Activated CD4-positive, alpha-beta memory T cell treated with anti-CD3 and anti-CD28 coated beads for 36 hours (primary cell): ENCODE measurements at regions of chr4 and their contacts with region 1.

Region 1: GRCh38 chr4:169612871-169613859 is 782 bp upstream of the NEK1 start:
- DNase-seq: peak; percentile 84
- H3K4me3 Mint-ChIP-seq: peak overlapping the region; percentile 86
- H3K27ac Mint-ChIP-seq: peak overlapping the region; percentile 94
- H3K4me1 Mint-ChIP-seq: peaks cover 53% of the 10 kb centered on the region
- H3K27me3 Mint-ChIP-seq: no peaks in the 10 kb centered on the region

Region 2: DNA sequence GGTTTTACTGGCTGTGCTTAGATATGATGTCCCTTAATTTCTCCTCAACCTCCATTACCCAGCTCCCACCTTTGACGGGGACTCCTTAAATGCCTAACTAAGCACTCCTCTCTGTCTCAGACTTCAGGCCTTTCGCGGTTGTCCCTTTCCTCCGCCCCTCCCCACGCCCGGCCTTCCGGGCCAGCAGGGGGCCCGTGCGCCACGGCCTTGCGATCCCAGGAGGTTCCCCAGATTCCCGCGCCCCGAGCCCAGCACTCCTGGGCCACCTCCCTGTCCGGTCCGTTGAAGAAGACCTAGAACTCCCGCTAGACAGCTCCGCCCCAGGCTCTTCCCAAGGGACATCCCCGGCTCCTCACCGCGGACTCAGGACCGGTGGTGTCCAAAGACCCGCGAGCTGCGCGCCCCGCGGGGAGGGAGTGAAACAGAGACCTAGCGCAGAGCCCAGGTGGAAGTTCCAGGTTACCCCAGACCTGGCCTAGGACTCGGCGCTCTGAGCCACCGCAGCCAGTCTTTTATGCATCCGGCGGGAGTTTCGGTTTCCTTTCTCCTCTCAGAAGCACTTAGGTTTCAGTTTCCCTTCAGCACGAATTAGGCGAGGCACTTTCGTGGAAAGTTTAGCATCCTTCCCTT is 1294.8 kb before region 1 on chr4 and contains the start of gene DDX60:
- CTCF ChIA-PET with region 1: no interaction called
- POLR2A ChIA-PET with region 1: no interaction called
- intact Hi-C with region 1: loop called (anchors 5 kb)
- DNase-seq: peak; percentile 89
- H3K4me3 Mint-ChIP-seq: peak within 1 kb of the TSS; percentile 84
- H3K27ac Mint-ChIP-seq: peak within 1 kb of the TSS; percentile 88
- H3K4me1 Mint-ChIP-seq: peaks cover 32% of the 10 kb centered on the region
- H3K27me3 Mint-ChIP-seq: no peaks in the 10 kb centered on the region
- total RNA-seq, gene DDX60: 24.1 to 28.9 TPM

Region 3: DNA sequence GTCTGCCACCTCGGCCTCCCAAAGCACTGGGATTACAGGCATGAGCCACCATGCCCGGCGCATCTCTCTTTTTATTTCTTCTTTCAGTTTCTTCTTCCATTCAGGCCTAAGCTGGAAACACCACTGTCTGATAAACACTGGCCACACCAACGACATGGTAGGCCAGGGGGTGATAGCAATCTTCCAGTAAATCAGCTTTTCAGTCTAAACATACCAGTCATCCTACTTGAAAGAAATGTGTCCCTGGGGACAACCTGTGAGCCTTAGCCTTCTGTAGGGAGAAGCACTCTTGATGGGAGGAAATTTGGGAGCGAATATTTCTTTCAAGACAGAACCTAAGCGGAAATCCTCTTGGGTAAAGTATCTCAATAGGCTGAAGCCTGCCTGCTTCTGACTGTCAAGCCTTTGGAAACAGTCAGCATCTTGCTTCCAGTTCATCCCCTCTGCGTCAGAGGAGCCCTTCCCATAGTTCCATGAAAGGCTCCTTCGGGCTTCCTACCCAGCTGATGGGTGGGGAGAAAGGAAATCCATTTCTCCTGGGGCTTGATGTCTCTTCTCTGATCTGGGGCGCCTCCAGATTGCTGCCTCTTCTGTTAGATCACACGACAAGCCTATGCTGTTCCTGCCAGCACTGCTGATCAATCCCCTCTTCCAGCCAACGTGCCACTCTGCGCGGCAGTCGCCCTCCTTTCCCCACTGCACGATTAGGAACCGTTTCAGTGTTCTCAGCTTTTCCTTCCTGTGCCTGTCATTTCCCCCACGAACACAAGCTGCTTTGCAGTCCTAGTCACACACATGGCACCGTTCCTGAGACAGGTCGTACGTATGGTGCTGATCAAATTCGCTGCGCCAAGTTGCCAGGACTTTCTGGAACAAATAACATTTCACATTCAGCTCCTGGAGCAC is 553.6 kb before region 1 on chr4:
- CTCF ChIA-PET with region 1: no interaction called
- POLR2A ChIA-PET with region 1: no interaction called
- intact Hi-C with region 1: no loop called
- DNase-seq: no peak
- H3K4me3 Mint-ChIP-seq: no peak overlapping the region
- H3K27ac Mint-ChIP-seq: no peak overlapping the region
- H3K4me1 Mint-ChIP-seq: no peaks in the 10 kb centered on the region
- H3K27me3 Mint-ChIP-seq: peaks cover 1% of the 10 kb centered on the region

Region 4: DNA sequence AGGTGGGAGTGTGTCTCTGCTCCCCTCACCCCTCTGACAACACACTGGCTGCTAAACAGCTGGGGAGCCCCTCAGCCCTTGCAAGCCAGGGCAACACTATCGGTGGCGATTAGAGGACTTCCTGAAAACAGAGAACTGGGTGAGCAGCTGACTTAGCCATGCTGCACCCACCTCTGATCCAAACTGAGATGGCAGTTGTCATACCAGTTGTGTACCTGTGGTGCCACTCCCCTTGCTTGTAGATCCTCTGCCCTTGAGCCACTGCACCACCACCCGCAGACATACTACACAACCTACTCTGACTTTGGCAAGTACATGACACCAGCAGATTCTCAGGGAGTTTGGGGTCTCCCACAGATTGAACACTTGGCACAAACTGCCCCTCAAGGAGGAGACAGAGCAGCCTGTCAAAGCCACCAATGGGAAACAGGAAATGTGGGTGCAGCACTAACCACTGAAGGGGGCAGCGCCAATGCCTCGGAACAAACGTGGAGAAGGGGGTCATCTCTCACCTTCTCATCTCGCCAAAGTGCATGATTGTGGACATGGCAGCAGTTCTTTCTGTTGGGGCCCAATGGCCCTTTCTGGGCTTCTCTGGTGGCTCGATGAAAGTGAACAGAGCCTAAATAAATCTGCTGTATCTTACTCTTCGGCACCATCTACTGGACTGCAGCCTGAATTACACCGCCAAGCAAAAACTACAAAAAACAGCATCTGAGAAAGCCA is 120.6 kb before region 1 on chr4:
- CTCF ChIA-PET with region 1: no interaction called
- POLR2A ChIA-PET with region 1: no interaction called
- intact Hi-C with region 1: no loop called
- DNase-seq: peak; percentile 41
- H3K4me3 Mint-ChIP-seq: no peak overlapping the region
- H3K27ac Mint-ChIP-seq: no peak overlapping the region
- H3K4me1 Mint-ChIP-seq: peaks cover 2% of the 10 kb centered on the region
- H3K27me3 Mint-ChIP-seq: no peaks in the 10 kb centered on the region

Region 5: DNA sequence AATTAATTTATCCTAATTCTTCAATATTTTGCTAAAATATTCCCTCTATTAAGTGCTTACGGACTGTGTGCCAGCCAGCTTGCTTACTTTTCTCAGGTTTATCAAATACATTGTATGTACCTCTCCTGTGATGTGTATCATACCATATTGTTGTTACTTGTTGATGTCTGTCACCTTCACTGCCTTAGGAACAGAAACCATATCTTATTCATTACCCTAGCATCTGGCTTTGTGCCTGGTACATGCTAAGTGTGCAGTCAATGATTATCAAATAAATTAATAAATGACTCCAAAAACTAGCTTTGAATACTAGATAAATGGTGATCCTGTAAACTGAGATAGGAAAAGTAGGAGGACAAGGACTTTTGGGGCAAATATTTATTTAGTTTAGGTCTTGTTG is 14.1 kb after region 1 on chr4:
- CTCF ChIA-PET with region 1: interaction called, 7 read pairs
- POLR2A ChIA-PET with region 1: interaction called, 13 read pairs
- intact Hi-C with region 1: loop called (anchors 1 kb)
- DNase-seq: no peak
- H3K4me3 Mint-ChIP-seq: no peak overlapping the region
- H3K27ac Mint-ChIP-seq: peak overlapping the region; percentile 33
- H3K4me1 Mint-ChIP-seq: peaks cover 51% of the 10 kb centered on the region
- H3K27me3 Mint-ChIP-seq: no peaks in the 10 kb centered on the region

Region 6: GRCh38 chr4:169723207-169723965 is 110.2 kb after region 1 on chr4:
- CTCF ChIA-PET with region 1: interaction called, 6 read pairs
- POLR2A ChIA-PET with region 1: no interaction called
- intact Hi-C with region 1: loop called (anchors 1 kb)
- DNase-seq: no peak
- H3K4me3 Mint-ChIP-seq: no peak overlapping the region
- H3K27ac Mint-ChIP-seq: no peak overlapping the region
- H3K4me1 Mint-ChIP-seq: peaks cover 11% of the 10 kb centered on the region
- H3K27me3 Mint-ChIP-seq: no peaks in the 10 kb centered on the region

Region 7: GRCh38 chr4:169791527-169792156 is 178.5 kb after region 1 on chr4:
- CTCF ChIA-PET with region 1: interaction called, 8 read pairs
- POLR2A ChIA-PET with region 1: no interaction called
- intact Hi-C with region 1: loop called (anchors 2 kb)
- DNase-seq: peak; percentile 35
- H3K4me3 Mint-ChIP-seq: peak overlapping the region; percentile 3
- H3K27ac Mint-ChIP-seq: no peak overlapping the region
- H3K4me1 Mint-ChIP-seq: peaks cover 16% of the 10 kb centered on the region
- H3K27me3 Mint-ChIP-seq: peaks cover 50% of the 10 kb centered on the region

Region 8: GRCh38 chr4:169968999-169969398 is 355.8 kb after region 1 on chr4:
- CTCF ChIA-PET with region 1: no interaction called
- POLR2A ChIA-PET with region 1: no interaction called
- intact Hi-C with region 1: loop called (anchors 5 kb)
- DNase-seq: no peak
- H3K4me3 Mint-ChIP-seq: no peak overlapping the region
- H3K27ac Mint-ChIP-seq: no peak overlapping the region
- H3K4me1 Mint-ChIP-seq: no peaks in the 10 kb centered on the region
- H3K27me3 Mint-ChIP-seq: peaks cover 1% of the 10 kb centered on the region

Region 9: DNA sequence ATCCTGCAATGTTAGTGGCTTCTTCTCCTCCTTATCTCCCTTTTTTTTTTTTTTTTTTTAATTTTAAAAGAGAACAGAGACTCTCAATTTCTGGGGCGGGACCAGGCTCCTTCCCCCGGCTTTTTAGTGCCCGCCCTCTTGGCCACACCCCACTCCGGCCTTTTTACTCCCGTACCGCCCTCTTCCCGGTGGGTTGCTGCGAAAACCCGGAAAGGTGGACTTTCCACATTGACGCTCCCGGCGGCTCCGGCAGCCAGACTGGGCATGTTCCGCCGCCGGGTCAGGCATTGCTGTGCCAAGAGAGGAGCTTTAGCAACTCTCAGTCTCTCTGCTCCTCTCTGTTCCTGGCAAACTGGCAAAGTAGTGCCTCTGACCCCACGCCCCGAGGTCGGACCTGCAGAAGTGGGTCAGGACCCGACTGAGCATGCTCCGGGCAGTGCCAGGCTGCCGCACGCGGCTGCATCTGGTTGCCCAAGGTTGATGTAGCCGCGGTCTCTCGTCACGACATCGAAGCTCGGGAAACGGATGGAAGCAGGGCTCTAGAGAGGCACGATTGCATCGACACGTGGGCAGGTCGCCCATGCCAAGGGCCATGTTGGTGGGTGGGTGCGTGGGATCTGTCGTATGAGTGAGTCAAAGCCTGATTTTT is 414.1 kb after region 1 on chr4:
- CTCF ChIA-PET with region 1: interaction called, 5 read pairs
- POLR2A ChIA-PET with region 1: interaction called, 3 read pairs
- intact Hi-C with region 1: loop called (anchors 1 kb)
- DNase-seq: peak; percentile 93
- H3K4me3 Mint-ChIP-seq: peak overlapping the region; percentile 79
- H3K27ac Mint-ChIP-seq: peak overlapping the region; percentile 71
- H3K4me1 Mint-ChIP-seq: peaks cover 9% of the 10 kb centered on the region
- H3K27me3 Mint-ChIP-seq: peaks cover 16% of the 10 kb centered on the region